PC-3 (cell line): ENCODE measurements at regions of chr15 and their contacts with region 1.

Region 1: GRCh38 chr15:71114896-71115554 is at the start of gene THSD4:
- DNase-seq: peak; percentile 89
- ATAC-seq: peak; percentile 69
- H3K4me3 ChIP-seq: peak within 1 kb of the TSS; percentile 81
- H3K27ac ChIP-seq: peak within 1 kb of the TSS; percentile 98
- H3K4me1 ChIP-seq: peaks cover 68% of the 10 kb centered on the region
- H3K27me3 ChIP-seq: no peaks in the 10 kb centered on the region
- CTCF ChIP-seq: peak; percentile 92
- total RNA-seq, gene THSD4: 29.0 and 39.3 TPM in 2 replicates

Region 2: GRCh38 chr15:70892002-70892914 is 222.8 kb before region 1 on chr15 and contains the starts of genes LRRC49 and THAP10:
- CTCF ChIA-PET with region 1: no interaction called
- POLR2A ChIA-PET with region 1: no interaction called
- intact Hi-C with region 1: loop called (anchors 10 kb)
- DNase-seq: peak; percentile 96
- ATAC-seq: peak; percentile 96
- H3K4me3 ChIP-seq: peak within 1 kb of the TSS; percentile 80
- H3K27ac ChIP-seq: peak within 1 kb of the TSS; percentile 70
- H3K4me1 ChIP-seq: peaks cover 19% of the 10 kb centered on the region
- H3K27me3 ChIP-seq: no peaks in the 10 kb centered on the region
- CTCF ChIP-seq: no peak
- total RNA-seq, gene LRRC49: 7.7 and 13.6 TPM in 2 replicates
- total RNA-seq, gene THAP10: 5.9 and 7.2 TPM in 2 replicates

Region 3: GRCh38 chr15:71168478-71168834 is 53.4 kb after region 1 on chr15:
- CTCF ChIA-PET with region 1: no interaction called
- POLR2A ChIA-PET with region 1: no interaction called
- intact Hi-C with region 1: no loop called
- DNase-seq: no peak
- ATAC-seq: no peak
- H3K4me3 ChIP-seq: no peak overlapping the region
- H3K27ac ChIP-seq: no peak overlapping the region
- H3K4me1 ChIP-seq: no peaks in the 10 kb centered on the region
- H3K27me3 ChIP-seq: no peaks in the 10 kb centered on the region
- CTCF ChIP-seq: no peak